Spleen (tissue), 13 donors: ENCODE measurements at regions of chr1 and their contacts with region 1.

Region 1: GRCh38 chr1:197924516-197925123 is 7.4 kb downstream of the LHX9 start:
- DNase-seq: no peak
- H3K4me3 ChIP-seq: no peak overlapping the region
- H3K27ac ChIP-seq: no peak overlapping the region
- H3K4me1 ChIP-seq: peaks cover 8 to 24% (median 16%) of the 10 kb centered on the region in 6 donors
- H3K27me3 ChIP-seq: peaks cover 3 to 96% (median 58%) of the 10 kb centered on the region in 7 donors
- CTCF ChIP-seq: peak in 10 of 11 experiments; percentile 40 to 75 (median 61)
- POLR2A ChIP-seq: no peak

Region 2: DNA sequence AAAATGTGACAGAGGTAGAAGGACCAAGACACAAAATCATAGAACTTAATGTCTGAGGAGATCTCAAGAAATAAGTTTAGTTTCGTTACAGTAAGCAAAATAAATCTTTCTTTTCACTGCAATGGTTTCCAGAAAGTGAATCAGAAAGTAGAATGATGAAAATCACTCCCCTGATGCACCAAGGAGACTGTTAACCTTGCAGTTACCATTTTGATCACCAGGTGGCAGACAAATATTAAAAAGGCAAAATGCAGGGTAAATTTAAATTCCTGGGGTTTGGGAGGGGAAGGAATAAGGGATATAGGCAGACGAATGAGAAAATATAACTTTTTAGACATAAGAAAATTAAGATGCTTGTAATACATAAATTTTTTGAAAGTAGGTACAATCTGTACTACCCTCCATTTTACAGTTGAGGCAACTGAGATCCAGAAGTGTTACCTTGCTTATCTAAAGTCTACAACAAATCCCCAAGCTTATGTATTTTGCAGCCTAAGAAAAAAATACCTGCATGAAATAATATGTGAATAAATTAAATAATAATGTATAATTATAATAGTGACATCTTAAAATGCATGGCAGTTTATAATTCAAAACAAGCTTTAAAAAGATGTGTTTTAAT is 403.4 kb before region 1 on chr1:
- intact Hi-C with region 1: loop called (anchors 5 kb)
- DNase-seq: no peak
- H3K4me3 ChIP-seq: no peak overlapping the region
- H3K27ac ChIP-seq: no peak overlapping the region
- H3K4me1 ChIP-seq: no peaks in the 10 kb centered on the region
- H3K27me3 ChIP-seq: no peaks in the 10 kb centered on the region
- CTCF ChIP-seq: peak; percentile 23 to 73 (median 56)
- POLR2A ChIP-seq: no peak

Region 3: GRCh38 chr1:197620714-197621163 is 303.9 kb before region 1 on chr1:
- intact Hi-C with region 1: loop called (anchors 2 kb)
- DNase-seq: no peak
- H3K4me3 ChIP-seq: no peak overlapping the region
- H3K27ac ChIP-seq: no peak overlapping the region
- H3K4me1 ChIP-seq: peaks cover 0 to under 1% (median 0%) of the 10 kb centered on the region in 6 donors
- H3K27me3 ChIP-seq: no peaks in the 10 kb centered on the region
- CTCF ChIP-seq: no peak
- POLR2A ChIP-seq: no peak

Region 4: GRCh38 chr1:198391393-198392046 is 466.9 kb after region 1 on chr1:
- intact Hi-C with region 1: no loop called
- DNase-seq: no peak
- H3K4me3 ChIP-seq: no peak overlapping the region
- H3K27ac ChIP-seq: no peak overlapping the region
- H3K4me1 ChIP-seq: no peaks in the 10 kb centered on the region
- H3K27me3 ChIP-seq: no peaks in the 10 kb centered on the region
- CTCF ChIP-seq: no peak
- POLR2A ChIP-seq: no peak

Region 5: DNA sequence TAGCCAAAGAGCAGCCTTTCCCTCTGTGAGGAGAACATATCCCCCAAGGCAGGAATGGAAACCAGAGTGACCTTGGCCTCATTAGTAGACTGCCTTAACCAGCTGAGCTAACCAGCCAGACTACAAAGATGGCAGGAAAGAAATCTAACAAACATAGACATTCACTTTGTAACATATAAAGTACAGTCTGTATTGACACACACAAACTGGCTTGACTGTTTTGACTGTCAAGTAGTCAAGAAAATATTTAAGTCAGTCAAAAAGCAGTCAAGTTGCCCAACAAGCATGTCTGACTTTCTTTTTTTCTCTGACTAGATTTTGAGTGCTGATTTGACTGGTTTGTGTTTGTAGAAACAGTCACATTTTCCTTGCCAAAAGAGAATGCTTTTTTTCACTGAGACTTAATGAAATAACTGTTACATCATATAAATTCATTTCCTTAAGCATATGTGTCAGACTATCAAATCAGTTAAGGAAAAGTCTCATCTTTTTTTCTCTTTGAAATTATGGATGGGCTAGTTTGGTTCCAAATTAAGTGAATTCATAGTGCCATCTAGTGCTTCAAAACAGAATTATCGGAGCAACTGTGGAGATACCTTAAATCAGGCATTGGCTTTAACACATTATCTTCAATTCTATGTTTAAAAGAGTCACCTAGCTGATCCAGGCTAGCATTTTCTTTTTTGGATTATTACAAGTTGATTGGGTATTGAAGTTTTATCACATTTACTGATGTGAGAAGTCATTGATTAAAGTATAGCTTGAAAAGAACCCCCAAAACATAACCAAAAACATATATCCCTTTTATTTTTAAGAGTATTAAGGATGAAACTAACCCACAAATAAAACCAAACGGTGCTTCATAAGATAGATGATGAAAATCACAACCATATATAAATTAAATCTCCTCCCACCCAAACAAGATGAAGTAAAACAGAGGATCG is 540.9 kb after region 1 on chr1:
- intact Hi-C with region 1: loop called (anchors 10 kb)
- DNase-seq: no peak
- H3K4me3 ChIP-seq: no peak overlapping the region
- H3K27ac ChIP-seq: no peak overlapping the region
- H3K4me1 ChIP-seq: no peaks in the 10 kb centered on the region
- H3K27me3 ChIP-seq: no peaks in the 10 kb centered on the region
- CTCF ChIP-seq: peak; percentile 30 to 77 (median 63)
- POLR2A ChIP-seq: no peak